Naive thymus-derived CD4-positive, alpha-beta T cell (primary cell): ENCODE measurements at regions of chr18 and their contacts with region 1.

Region 1: GRCh38 chr18:62264984-62265383 is 60.1 kb upstream of the TNFRSF11A start:
- DNase-seq: no peak
- ATAC-seq: no peak
- H3K4me3 ChIP-seq: no peak overlapping the region
- H3K4me3 Mint-ChIP-seq: no peak overlapping the region
- H3K27ac ChIP-seq: no peak overlapping the region
- H3K27ac Mint-ChIP-seq: peak overlapping the region in 1 of 9 donors; percentile 14
- H3K4me1 ChIP-seq: no peaks in the 10 kb centered on the region
- H3K4me1 Mint-ChIP-seq: peaks cover 2 to 15% (median 8%) of the 10 kb centered on the region in 7 donors
- H3K27me3 ChIP-seq: no peaks in the 10 kb centered on the region
- H3K27me3 Mint-ChIP-seq: no peaks in the 10 kb centered on the region

Region 2: GRCh38 chr18:61797696-61798590 is 467.0 kb before region 1 on chr18:
- CTCF ChIA-PET with region 1: no interaction called
- POLR2A ChIA-PET with region 1: no interaction called
- intact Hi-C with region 1: no loop called
- DNase-seq: no peak
- ATAC-seq: no peak
- H3K4me3 ChIP-seq: no peak overlapping the region
- H3K4me3 Mint-ChIP-seq: no peak overlapping the region
- H3K27ac ChIP-seq: no peak overlapping the region
- H3K27ac Mint-ChIP-seq: no peak overlapping the region
- H3K4me1 ChIP-seq: no peaks in the 10 kb centered on the region
- H3K4me1 Mint-ChIP-seq: no peaks in the 10 kb centered on the region
- H3K27me3 ChIP-seq: no peaks in the 10 kb centered on the region
- H3K27me3 Mint-ChIP-seq: peaks cover 4 to 19% (median 14%) of the 10 kb centered on the region in 5 donors

Region 3: GRCh38 chr18:62239475-62239874 is 25.5 kb before region 1 on chr18:
- CTCF ChIA-PET with region 1: no interaction called
- POLR2A ChIA-PET with region 1: no interaction called
- intact Hi-C with region 1: no loop called
- DNase-seq: no peak
- ATAC-seq: no peak
- H3K4me3 ChIP-seq: no peak overlapping the region
- H3K4me3 Mint-ChIP-seq: no peak overlapping the region
- H3K27ac ChIP-seq: no peak overlapping the region
- H3K27ac Mint-ChIP-seq: peak overlapping the region in 1 of 9 donors; percentile 19
- H3K4me1 ChIP-seq: no peaks in the 10 kb centered on the region
- H3K4me1 Mint-ChIP-seq: peaks cover 6 to 28% (median 19%) of the 10 kb centered on the region in 7 donors
- H3K27me3 ChIP-seq: no peaks in the 10 kb centered on the region
- H3K27me3 Mint-ChIP-seq: no peaks in the 10 kb centered on the region

Region 4: GRCh38 chr18:62279561-62279960 is 14.6 kb after region 1 on chr18:
- CTCF ChIA-PET with region 1: no interaction called
- POLR2A ChIA-PET with region 1: no interaction called
- intact Hi-C with region 1: loop called in 1 of 2 experiments (anchors 2 kb)
- DNase-seq: no peak
- ATAC-seq: no peak
- H3K4me3 ChIP-seq: no peak overlapping the region
- H3K4me3 Mint-ChIP-seq: no peak overlapping the region
- H3K27ac ChIP-seq: no peak overlapping the region
- H3K27ac Mint-ChIP-seq: no peak overlapping the region
- H3K4me1 ChIP-seq: no peaks in the 10 kb centered on the region
- H3K4me1 Mint-ChIP-seq: peaks cover 0 to 26% (median 0%) of the 10 kb centered on the region in 7 donors
- H3K27me3 ChIP-seq: no peaks in the 10 kb centered on the region
- H3K27me3 Mint-ChIP-seq: no peaks in the 10 kb centered on the region

Region 5: DNA sequence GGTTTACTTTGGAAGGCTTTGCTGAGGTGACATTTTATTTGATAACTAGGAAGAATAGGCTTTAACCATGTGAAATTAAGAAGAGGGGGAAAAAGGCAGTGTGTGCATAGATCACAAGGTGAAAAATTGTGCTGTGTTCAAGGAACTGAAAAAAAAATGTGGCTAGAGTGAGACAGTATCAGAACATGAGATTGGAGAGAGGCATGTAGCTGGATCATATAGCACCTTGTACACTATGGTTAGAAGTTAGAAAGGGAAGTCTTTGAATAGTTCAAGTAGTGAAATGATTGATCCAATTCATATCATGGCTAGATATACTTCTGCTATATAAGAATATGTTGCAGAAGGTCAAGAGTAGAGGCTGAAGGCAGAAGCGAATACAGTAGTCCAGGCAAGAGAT is 47.9 kb after region 1 on chr18:
- CTCF ChIA-PET with region 1: no interaction called
- POLR2A ChIA-PET with region 1: no interaction called
- intact Hi-C with region 1: loop called in 1 of 2 experiments (anchors 5 kb)
- DNase-seq: no peak
- ATAC-seq: no peak
- H3K4me3 ChIP-seq: no peak overlapping the region
- H3K4me3 Mint-ChIP-seq: no peak overlapping the region
- H3K27ac ChIP-seq: no peak overlapping the region
- H3K27ac Mint-ChIP-seq: no peak overlapping the region
- H3K4me1 ChIP-seq: no peaks in the 10 kb centered on the region
- H3K4me1 Mint-ChIP-seq: peaks cover 0 to 2% (median 0%) of the 10 kb centered on the region in 7 donors
- H3K27me3 ChIP-seq: no peaks in the 10 kb centered on the region
- H3K27me3 Mint-ChIP-seq: peaks cover 0 to 18% (median 6%) of the 10 kb centered on the region in 5 donors